MCF 10A (cell line): ENCODE measurements at regions of chr1 and their contacts with region 1.

Region 1: GRCh38 chr1:24201941-24202440 is 14.9 kb upstream of the IFNLR1 start:
- DNase-seq: peak; percentile 98
- H3K4me3 Mint-ChIP-seq: no peak overlapping the region
- H3K27ac Mint-ChIP-seq: no peak overlapping the region
- H3K4me1 Mint-ChIP-seq: peaks cover 21% of the 10 kb centered on the region
- H3K27me3 Mint-ChIP-seq: no peaks in the 10 kb centered on the region
- CTCF ChIP-seq: peak; percentile 89

Region 2: DNA sequence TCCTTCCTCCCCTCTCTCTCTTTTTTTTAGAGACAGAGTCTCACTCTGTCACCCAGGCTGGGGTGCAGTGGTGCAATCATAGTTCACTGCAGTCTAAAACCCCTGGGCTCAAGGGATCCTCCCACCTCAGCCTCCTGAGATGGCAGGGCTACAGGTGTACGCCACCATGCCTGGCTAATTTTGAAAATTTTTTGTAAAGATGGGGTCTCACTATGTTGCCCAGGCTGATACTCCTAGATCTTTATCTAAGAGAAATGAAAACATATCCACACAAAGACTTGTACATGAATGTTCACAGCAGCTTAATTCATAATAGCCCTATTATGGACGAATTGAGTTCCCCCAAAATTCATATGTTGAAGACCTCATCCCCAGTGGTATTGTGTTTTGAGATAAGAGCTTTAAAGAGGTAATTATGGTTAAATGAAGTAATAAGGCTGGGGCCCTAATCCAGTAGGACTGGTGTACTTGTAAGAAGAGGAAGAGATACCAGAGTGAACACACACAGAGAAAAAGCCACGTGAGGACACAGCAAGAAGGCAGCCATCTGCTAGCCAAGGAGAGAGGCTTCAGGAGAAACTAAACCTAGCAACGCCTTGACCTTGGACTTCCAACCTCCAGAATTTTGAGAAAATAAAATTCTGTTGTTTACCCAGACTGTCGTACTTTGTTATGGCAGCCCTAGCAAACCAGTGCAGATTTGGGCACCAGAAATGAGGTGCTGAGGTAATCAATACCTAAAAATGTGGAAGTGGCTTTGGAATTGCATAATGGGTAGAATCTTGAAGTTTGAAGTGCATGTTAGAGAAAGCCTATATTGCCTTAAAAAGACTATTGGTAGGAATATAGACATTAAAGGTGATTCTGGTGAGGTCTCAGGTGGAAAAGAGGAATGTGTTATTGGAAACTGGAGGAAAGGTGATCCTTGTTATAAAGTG is 28.1 kb before region 1 on chr1:
- CTCF ChIA-PET with region 1: interaction called, 10 read pairs
- POLR2A ChIA-PET with region 1: no interaction called
- intact Hi-C with region 1: no loop called
- DNase-seq: no peak
- H3K4me3 Mint-ChIP-seq: no peak overlapping the region
- H3K27ac Mint-ChIP-seq: no peak overlapping the region
- H3K4me1 Mint-ChIP-seq: no peaks in the 10 kb centered on the region
- H3K27me3 Mint-ChIP-seq: no peaks in the 10 kb centered on the region
- CTCF ChIP-seq: no peak

Region 3: DNA sequence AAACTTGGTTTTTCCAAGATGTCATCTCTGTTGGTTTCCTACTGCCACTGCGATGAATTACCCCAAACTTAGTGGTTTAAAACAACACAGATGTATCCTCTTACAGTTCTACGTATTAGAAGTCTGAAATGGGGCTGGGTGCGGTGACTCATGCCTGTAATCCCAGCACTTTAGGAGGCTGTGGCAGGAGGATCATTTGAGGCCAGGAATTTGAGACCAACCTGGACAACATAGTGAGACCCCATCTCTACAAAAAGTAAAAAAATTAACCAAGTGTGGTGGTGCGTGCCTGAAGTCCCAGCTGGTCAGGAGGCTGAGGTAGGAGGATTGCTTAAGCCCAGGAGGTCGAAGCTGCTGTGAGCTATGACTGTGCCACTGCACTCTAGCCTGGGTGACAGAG is 60.0 kb after region 1 on chr1:
- CTCF ChIA-PET with region 1: no interaction called
- POLR2A ChIA-PET with region 1: no interaction called
- intact Hi-C with region 1: no loop called
- DNase-seq: no peak
- H3K4me3 Mint-ChIP-seq: no peak overlapping the region
- H3K27ac Mint-ChIP-seq: no peak overlapping the region
- H3K4me1 Mint-ChIP-seq: peaks cover 11% of the 10 kb centered on the region
- H3K27me3 Mint-ChIP-seq: no peaks in the 10 kb centered on the region
- CTCF ChIP-seq: no peak

Region 4: GRCh38 chr1:24289937-24290595 is 88.1 kb after region 1 on chr1:
- CTCF ChIA-PET with region 1: interaction called, 37 read pairs
- POLR2A ChIA-PET with region 1: interaction called, 17 read pairs
- intact Hi-C with region 1: loop called (anchors 1 kb)
- DNase-seq: peak; percentile 99
- H3K4me3 Mint-ChIP-seq: peak overlapping the region; percentile 44
- H3K27ac Mint-ChIP-seq: peak overlapping the region; percentile 94
- H3K4me1 Mint-ChIP-seq: peaks cover 55% of the 10 kb centered on the region
- H3K27me3 Mint-ChIP-seq: no peaks in the 10 kb centered on the region
- CTCF ChIP-seq: no peak

Region 5: DNA sequence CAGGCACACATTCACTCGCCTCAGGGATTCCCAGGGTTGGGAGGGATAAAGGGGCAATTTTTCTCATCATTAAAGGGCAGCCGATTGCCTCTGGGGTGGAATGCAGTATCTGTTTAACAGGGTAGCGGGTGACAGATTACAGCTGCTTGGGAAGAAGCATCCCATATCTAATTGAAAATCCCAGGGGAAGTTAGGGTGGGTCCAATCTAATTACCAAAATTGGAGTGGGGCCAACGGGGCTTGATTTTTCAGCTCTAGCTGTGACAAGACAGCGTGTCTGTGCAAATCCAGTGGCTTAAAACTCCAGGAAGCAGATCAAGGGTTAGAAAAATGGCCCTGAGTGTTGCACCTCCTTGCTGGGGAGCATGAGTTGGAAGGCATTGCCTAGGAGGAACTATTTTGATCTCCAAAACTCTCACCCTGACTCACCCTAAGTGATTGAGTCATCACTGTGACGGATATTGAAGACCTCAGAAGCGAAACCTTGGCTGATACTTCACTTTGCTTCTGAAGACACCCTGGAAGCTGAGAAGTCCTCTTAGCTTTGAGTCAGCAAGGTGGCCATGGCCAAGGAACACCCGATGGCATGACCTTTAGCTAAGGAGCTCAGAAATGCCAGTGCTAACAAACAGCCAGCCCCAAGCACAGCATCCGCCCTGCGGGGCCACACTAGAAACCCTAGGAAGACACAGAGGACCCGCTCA is 163.1 kb after region 1 on chr1:
- CTCF ChIA-PET with region 1: interaction called, 8 read pairs
- POLR2A ChIA-PET with region 1: interaction called, 13 read pairs
- intact Hi-C with region 1: no loop called
- DNase-seq: peak; percentile 98
- H3K4me3 Mint-ChIP-seq: peak overlapping the region; percentile 28
- H3K27ac Mint-ChIP-seq: peak overlapping the region; percentile 89
- H3K4me1 Mint-ChIP-seq: peaks cover 33% of the 10 kb centered on the region
- H3K27me3 Mint-ChIP-seq: no peaks in the 10 kb centered on the region
- CTCF ChIP-seq: no peak

Region 6: DNA sequence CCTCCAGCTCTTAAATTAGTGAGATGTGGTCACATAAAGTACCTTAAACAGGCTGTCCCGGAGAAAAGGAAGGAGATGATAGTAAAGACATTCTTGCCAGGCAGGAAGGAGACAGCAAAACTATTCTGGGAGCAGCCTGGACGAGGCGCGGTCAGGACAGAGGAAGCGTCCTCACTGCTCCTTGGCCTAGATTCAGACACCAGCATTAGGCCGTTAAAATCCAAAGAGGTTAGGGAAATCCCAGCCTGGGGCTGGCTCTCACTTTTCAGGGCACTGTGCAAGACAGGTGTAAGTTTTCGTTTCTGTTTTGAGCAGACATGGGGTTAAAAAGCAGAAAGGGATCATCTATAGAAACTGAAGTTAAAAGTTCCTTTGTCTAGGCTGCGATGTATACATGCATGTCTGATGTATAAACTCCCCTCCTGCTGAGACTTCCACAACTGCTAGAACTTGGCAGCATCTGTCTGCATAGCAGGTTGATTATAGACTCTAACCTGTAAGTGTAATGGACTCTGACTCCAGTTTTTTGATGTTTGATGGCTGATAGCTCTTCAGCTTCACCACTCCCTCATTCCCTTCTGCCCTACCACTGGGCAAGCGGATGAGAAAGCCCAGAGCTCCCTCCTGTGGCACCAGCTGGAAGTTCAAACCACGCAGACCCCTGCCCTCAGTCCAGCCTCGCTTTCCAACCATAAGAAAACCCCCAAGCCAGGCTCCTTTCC is 190.1 kb after region 1 on chr1:
- CTCF ChIA-PET with region 1: interaction called, 365 read pairs
- POLR2A ChIA-PET with region 1: interaction called, 155 read pairs
- intact Hi-C with region 1: loop called (anchors 1 kb)
- DNase-seq: peak; percentile 71
- H3K4me3 Mint-ChIP-seq: peak overlapping the region; percentile 64
- H3K27ac Mint-ChIP-seq: peak overlapping the region; percentile 97
- H3K4me1 Mint-ChIP-seq: peaks cover 55% of the 10 kb centered on the region
- H3K27me3 Mint-ChIP-seq: no peaks in the 10 kb centered on the region
- CTCF ChIP-seq: peak; percentile 87

Region 7: GRCh38 chr1:24526940-24527542 is 325.1 kb after region 1 on chr1:
- CTCF ChIA-PET with region 1: interaction called, 7 read pairs
- POLR2A ChIA-PET with region 1: interaction called, 3 read pairs
- intact Hi-C with region 1: loop called (anchors 10 kb)
- DNase-seq: peak; percentile 38
- H3K4me3 Mint-ChIP-seq: no peak overlapping the region
- H3K27ac Mint-ChIP-seq: no peak overlapping the region
- H3K4me1 Mint-ChIP-seq: no peaks in the 10 kb centered on the region
- H3K27me3 Mint-ChIP-seq: no peaks in the 10 kb centered on the region
- CTCF ChIP-seq: peak; percentile 49